Endothelial cell of umbilical vein (primary cell): ENCODE measurements at regions of chr10 and their contacts with region 1.

Region 1: GRCh38 chr10:48363617-48364355 is 57.3 kb downstream of the MAPK8 start:
- DNase-seq: peak; percentile 90
- H3K4me3 ChIP-seq: peak overlapping the region in 1 of 3 experiments; percentile 46
- H3K27ac ChIP-seq: peak overlapping the region; percentile 77
- H3K4me1 ChIP-seq: peaks cover 41% of the 10 kb centered on the region
- H3K27me3 ChIP-seq: no peaks in the 10 kb centered on the region
- CTCF ChIP-seq: peak; percentile 45 to 47
- POLR2A ChIP-seq: no peak

Region 2: GRCh38 chr10:48306265-48306869 is 57.4 kb before region 1 on chr10 and contains the start of gene MAPK8:
- CTCF ChIA-PET with region 1: interaction called, 11 read pairs
- POLR2A ChIA-PET with region 1: no interaction called
- dilution Hi-C with region 1: no loop called
- intact Hi-C with region 1: loop called (anchors 2 kb)
- DNase-seq: peak; percentile 85
- H3K4me3 ChIP-seq: peak within 1 kb of the TSS; percentile 64 to 97 (median 80)
- H3K27ac ChIP-seq: peak within 1 kb of the TSS; percentile 76
- H3K4me1 ChIP-seq: peaks cover 29% of the 10 kb centered on the region
- H3K27me3 ChIP-seq: peaks cover 6% of the 10 kb centered on the region in 2 experiments
- CTCF ChIP-seq: no peak
- POLR2A ChIP-seq: peak; percentile 85
- total RNA-seq, gene MAPK8: 50.1 and 56.2 TPM in 2 replicates

Region 3: GRCh38 chr10:48336978-48337599 is 26.7 kb before region 1 on chr10:
- CTCF ChIA-PET with region 1: no interaction called
- POLR2A ChIA-PET with region 1: no interaction called
- dilution Hi-C with region 1: no loop called
- intact Hi-C with region 1: no loop called
- DNase-seq: no peak
- H3K4me3 ChIP-seq: no peak overlapping the region
- H3K27ac ChIP-seq: no peak overlapping the region
- H3K4me1 ChIP-seq: no peaks in the 10 kb centered on the region
- H3K27me3 ChIP-seq: no peaks in the 10 kb centered on the region
- CTCF ChIP-seq: no peak
- POLR2A ChIP-seq: no peak

Region 4: GRCh38 chr10:48400129-48400849 is 36.5 kb after region 1 on chr10:
- CTCF ChIA-PET with region 1: interaction called, 12 read pairs
- POLR2A ChIA-PET with region 1: no interaction called
- dilution Hi-C with region 1: no loop called
- intact Hi-C with region 1: loop called (anchors 2 kb)
- DNase-seq: peak; percentile 63
- H3K4me3 ChIP-seq: no peak overlapping the region
- H3K27ac ChIP-seq: peak overlapping the region; percentile 20
- H3K4me1 ChIP-seq: peaks cover 19% of the 10 kb centered on the region
- H3K27me3 ChIP-seq: no peaks in the 10 kb centered on the region
- CTCF ChIP-seq: no peak
- POLR2A ChIP-seq: no peak

Region 5: DNA sequence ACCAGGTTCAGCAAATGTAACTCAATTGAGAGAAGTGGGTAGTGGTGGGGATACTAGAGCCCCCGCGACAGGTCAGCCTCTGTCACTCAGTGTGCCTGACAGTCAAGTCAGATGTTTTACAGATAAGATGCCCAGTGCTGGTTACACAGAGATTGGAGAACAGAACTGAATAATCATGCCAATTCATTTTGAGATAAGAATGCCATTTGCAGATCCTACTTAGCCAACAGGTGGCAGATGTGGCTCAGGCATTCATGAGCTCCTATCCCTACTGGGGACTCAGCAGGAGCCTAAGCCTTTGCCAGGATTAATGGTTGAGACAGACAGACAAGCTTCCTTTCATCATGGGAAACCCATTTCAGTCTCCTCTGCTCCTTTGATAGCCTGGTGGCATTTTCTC is 80.5 kb after region 1 on chr10:
- CTCF ChIA-PET with region 1: interaction called, 69 read pairs
- POLR2A ChIA-PET with region 1: interaction called, 4 read pairs
- dilution Hi-C with region 1: no loop called
- intact Hi-C with region 1: loop called (anchors 1 kb)
- DNase-seq: peak; percentile 76
- H3K4me3 ChIP-seq: no peak overlapping the region
- H3K27ac ChIP-seq: no peak overlapping the region
- H3K4me1 ChIP-seq: peaks cover 5% of the 10 kb centered on the region
- H3K27me3 ChIP-seq: no peaks in the 10 kb centered on the region
- CTCF ChIP-seq: peak; percentile 29 to 58
- POLR2A ChIP-seq: no peak

Region 6: DNA sequence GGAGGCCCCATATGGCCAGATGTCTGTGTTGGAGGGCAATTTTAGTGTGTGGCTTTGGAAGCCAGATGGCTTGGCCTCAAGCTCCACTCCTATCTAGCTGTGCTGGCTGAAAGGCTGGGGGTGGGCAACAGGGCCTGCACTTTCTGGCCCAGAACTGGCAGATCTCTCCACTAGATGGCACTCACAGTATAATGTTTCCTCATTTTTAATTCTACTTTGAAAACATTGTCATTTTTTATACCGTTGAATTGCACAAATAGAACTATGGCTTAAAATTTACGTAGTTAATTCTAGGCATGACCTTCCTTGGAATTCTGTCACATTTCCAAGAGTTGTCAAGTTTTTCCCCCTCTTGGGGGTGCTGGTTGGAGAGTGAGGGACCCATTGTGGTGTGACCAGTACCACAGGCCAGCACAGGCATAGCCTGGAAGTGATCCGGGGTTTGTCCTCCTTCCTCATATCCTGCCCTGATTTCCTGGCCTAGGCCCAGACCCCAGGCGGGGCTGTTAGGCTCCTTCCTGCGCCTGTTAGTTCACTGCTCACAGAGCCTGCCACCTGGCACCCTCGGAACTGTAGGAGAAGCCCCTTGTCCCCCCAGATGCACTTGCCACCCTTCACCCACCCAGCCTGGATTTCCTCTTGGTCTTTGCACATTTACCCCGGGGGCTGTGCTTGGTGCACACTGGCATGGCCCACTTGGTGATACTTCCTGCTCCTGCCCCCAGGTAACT is 188.2 kb after region 1 on chr10:
- CTCF ChIA-PET with region 1: interaction called, 56 read pairs
- POLR2A ChIA-PET with region 1: no interaction called
- dilution Hi-C with region 1: no loop called
- intact Hi-C with region 1: loop called (anchors 1 kb)
- DNase-seq: peak; percentile 68
- H3K4me3 ChIP-seq: no peak overlapping the region
- H3K27ac ChIP-seq: peak overlapping the region; percentile 45
- H3K4me1 ChIP-seq: peaks cover 37% of the 10 kb centered on the region
- H3K27me3 ChIP-seq: no peaks in the 10 kb centered on the region
- CTCF ChIP-seq: peak; percentile 66 to 77
- POLR2A ChIP-seq: no peak

Region 7: DNA sequence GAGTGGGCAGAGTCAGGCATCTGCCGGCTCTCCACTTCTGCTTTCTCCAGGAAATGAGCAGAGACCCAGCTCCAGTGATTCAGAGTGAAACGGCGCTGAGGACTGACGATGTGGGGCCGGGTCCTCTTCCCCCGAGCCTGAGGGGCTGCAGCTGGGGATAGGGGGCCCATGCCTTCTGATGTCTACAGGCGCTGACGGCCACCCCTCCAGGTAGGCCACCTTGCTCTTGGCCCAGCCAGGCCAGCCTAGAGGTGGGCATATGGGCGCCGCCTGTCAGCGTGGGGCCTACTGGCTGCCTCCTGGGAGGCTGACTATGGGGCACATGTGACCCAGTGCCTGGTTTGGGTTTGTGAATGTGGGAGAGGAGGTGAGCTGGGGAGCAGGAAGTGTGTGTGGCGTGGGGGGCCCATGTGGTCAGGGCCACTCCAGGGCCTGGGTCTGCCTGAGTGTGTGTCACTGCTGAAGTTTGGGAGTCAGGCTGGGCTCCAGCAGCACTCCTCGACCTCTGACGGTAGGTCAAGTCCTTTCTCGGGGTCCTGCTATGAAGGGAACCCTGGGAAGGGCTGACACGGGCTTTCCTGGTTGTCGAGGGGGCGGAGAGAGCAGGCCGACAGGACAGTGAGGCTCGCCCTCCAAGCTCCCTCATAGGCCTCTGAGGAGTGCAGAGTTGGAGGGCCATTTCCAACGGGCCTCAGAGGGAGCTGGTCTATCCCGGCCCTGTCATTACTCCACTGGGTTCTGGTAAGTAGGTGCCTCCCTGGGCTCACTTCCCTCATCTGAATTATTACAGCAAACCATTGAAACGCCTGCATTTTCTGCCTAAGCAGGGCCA is 321.2 kb after region 1 on chr10 and contains the start of gene WDFY4:
- CTCF ChIA-PET with region 1: no interaction called
- POLR2A ChIA-PET with region 1: no interaction called
- dilution Hi-C with region 1: no loop called
- intact Hi-C with region 1: no loop called
- DNase-seq: no peak
- H3K4me3 ChIP-seq: no peak within 1 kb of the TSS
- H3K27ac ChIP-seq: no peak within 1 kb of the TSS
- H3K4me1 ChIP-seq: no peaks in the 10 kb centered on the region
- H3K27me3 ChIP-seq: peaks cover 2 to 3% of the 10 kb centered on the region in 2 experiments
- CTCF ChIP-seq: no peak
- POLR2A ChIP-seq: no peak
- total RNA-seq, gene WDFY4: 10.2 and 10.5 TPM in 2 replicates

Region 8: GRCh38 chr10:48838834-48839233 is 475.0 kb after region 1 on chr10:
- CTCF ChIA-PET with region 1: no interaction called
- POLR2A ChIA-PET with region 1: no interaction called
- dilution Hi-C with region 1: no loop called
- intact Hi-C with region 1: no loop called
- DNase-seq: no peak
- H3K4me3 ChIP-seq: no peak overlapping the region
- H3K27ac ChIP-seq: no peak overlapping the region
- H3K4me1 ChIP-seq: no peaks in the 10 kb centered on the region
- H3K27me3 ChIP-seq: peaks cover 0 to 5% of the 10 kb centered on the region in 2 experiments
- CTCF ChIP-seq: no peak
- POLR2A ChIP-seq: no peak

Region 9: DNA sequence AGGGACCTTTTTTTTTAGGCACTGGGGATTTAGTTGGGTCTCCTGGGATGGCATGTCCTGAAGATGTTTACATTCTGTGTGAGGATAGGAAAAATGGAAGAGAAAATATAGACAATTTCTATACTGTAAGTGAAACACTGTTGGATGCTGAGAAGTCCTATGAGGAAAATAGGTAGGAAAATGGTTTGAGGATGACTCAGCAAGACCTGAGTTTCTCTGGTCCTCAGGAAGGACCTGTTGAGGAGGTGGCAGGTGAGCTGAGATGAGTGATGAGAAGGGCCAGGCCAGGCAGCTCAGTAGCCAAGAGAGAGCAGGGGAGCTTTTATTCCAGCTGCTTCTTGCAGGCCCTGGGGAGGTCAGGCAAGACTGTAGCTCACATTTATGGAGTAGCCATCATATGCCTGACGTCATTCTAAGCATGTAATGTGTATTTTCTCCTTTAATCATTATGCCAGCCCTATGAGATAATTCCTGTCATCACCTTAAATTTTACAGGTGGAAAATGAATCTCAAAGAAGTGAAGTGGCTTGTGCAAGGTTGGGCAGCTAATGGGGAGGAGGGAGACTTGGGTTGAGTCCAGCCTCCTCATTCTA is 594.9 kb after region 1 on chr10:
- CTCF ChIA-PET with region 1: no interaction called
- POLR2A ChIA-PET with region 1: no interaction called
- dilution Hi-C with region 1: no loop called
- intact Hi-C with region 1: no loop called
- DNase-seq: no peak
- H3K4me3 ChIP-seq: no peak overlapping the region
- H3K27ac ChIP-seq: no peak overlapping the region
- H3K4me1 ChIP-seq: no peaks in the 10 kb centered on the region
- H3K27me3 ChIP-seq: no peaks in the 10 kb centered on the region
- CTCF ChIP-seq: no peak
- POLR2A ChIP-seq: no peak

Region 10: DNA sequence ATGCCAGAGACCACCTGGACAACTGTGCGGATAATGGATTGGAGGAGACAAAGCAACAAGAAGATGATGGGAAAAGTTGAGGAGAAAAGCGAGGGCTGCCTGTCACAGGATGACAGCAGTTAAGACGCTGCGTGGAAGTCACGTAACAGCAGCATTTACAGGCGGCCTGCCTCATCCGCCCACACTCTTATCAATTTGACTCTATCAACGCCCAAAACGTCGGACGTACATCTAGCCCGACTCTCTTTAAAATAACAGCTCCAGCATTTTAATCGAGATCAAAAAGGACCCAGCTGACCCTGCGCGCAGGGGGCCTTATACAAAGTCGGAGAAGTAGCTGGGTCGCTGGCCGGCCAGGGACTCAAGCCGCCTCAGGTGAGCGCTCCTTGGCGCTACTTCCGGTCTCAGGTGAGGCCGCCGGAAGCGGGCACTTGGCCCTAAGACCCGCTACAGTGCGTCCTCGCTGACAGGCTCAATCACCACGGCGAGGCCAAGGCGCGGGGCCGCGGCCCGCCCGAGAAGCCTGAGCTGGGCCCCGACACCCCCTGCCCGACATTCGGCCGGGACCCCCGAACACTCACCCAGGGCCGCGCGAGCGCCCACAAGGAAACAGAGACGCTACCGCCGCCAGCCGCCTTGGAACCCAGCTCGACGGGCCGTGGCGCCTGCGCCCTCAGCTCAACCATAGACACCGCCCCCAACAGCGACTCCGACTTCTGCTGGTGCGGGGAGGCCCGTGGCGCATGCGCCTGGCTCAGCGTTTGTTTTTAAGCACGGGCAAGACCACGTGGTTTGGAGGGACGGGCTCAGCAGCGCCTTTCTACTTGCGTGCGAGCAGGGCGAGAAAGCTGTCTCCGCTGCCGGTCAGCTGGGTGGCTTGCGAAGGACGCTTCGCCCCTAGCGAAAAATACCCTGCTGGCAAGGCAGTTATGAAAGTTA is 1174.9 kb after region 1 on chr10 and contains the start of gene ERCC6:
- CTCF ChIA-PET with region 1: no interaction called
- POLR2A ChIA-PET with region 1: no interaction called
- dilution Hi-C with region 1: no loop called
- intact Hi-C with region 1: loop called (anchors 10 kb)
- DNase-seq: peak; percentile 99
- H3K4me3 ChIP-seq: peak within 1 kb of the TSS; percentile 17 to 85 (median 70)
- H3K27ac ChIP-seq: peak within 1 kb of the TSS; percentile 84
- H3K4me1 ChIP-seq: peaks cover 45% of the 10 kb centered on the region
- H3K27me3 ChIP-seq: no peaks in the 10 kb centered on the region
- CTCF ChIP-seq: no peak
- POLR2A ChIP-seq: peak; percentile 39
- total RNA-seq, gene ERCC6: 39.6 and 59.6 TPM in 2 replicates